HepG2 (cell line): ENCODE measurements at regions of chr17 and their contacts with region 1.

Region 1: DNA sequence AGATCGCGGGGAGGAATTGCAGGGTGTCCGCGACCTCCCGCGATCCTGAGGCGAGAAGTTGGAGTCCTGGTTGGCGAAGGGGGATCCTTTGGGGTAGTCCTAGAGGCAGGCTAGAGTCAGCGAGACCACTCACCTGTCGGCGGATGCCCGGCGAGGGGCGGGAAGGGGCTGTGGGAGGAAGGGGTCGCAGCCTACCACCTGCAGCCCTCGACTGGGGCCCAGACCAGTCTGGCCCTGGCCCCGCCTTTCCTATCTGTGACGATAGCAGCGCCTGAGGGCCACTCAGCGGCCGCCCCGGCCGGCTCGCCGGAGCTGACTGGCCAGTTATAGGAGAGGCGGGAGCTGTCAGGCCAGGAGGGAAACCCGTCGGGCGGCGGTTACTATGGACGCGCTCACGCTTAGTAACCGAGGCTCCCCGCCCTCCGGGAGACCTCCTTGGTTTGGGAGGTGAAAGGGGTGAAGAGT is at the start of gene TEKT3:
- DNase-seq: no peak
- ATAC-seq: no peak
- H3K4me3 ChIP-seq: no peak within 1 kb of the TSS
- H3K27ac ChIP-seq: no peak within 1 kb of the TSS
- H3K4me1 ChIP-seq: peaks cover 11% of the 10 kb centered on the region
- H3K27me3 ChIP-seq: peaks cover 0 to 31% of the 10 kb centered on the region in 2 experiments; a peak in 3 of 5 replicates
- CTCF ChIP-seq: no peak
- EP300 ChIP-seq: no peak
- POLR2A ChIP-seq: no peak
- RAD21 ChIP-seq: no peak
- total RNA-seq, gene TEKT3: 0.58 TPM in 1 of 2 replicates, not detected in the other

Region 2: DNA sequence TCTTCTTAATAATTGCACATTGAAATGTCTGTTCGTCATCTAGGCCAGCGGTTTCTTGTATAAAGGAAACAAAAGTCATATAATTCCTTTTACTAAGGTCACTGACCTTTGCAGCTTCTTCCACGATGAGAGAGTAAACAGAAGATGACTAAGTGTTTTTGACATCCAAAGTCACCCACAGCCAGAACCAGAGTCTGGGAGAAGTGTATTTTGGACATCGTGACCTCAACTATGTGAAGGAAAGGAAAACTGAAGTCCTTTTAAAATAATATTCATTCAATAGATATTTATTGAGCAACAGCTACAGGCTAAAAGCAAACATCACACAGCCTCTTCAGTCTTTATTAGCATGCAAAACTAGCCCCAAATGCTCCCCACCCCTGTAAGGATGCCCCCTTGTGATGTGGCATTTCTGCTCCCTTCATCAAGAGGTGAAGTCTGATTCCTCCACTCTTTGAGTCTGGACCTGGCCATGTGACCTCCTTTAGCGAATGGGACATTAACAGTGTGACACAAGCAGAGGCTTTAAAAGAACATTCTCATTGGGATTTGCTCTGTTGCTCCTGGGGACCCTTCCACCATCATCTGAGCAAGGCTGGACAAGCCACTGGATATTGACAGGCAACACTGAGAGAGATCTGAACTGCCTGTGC is 68.2 kb before region 1 on chr17:
- CTCF ChIA-PET with region 1: no interaction called
- POLR2A ChIA-PET with region 1: no interaction called
- in situ Hi-C with region 1: no loop called
- intact Hi-C with region 1: no loop called
- DNase-seq: no peak
- ATAC-seq: no peak
- H3K4me3 ChIP-seq: no peak overlapping the region
- H3K27ac ChIP-seq: no peak overlapping the region
- H3K4me1 ChIP-seq: no peaks in the 10 kb centered on the region; the same call in 1 of the 2 replicates
- H3K27me3 ChIP-seq: peaks cover 0 to 5% of the 10 kb centered on the region in 2 experiments; a peak in 3 of 5 replicates
- CTCF ChIP-seq: no peak
- EP300 ChIP-seq: no peak
- POLR2A ChIP-seq: no peak
- RAD21 ChIP-seq: no peak

Region 3: GRCh38 chr17:15289285-15290185 is 51.9 kb before region 1 on chr17:
- CTCF ChIA-PET with region 1: no interaction called
- POLR2A ChIA-PET with region 1: no interaction called
- in situ Hi-C with region 1: loop called (anchors 10 kb)
- intact Hi-C with region 1: no loop called
- DNase-seq: peak; percentile 25
- ATAC-seq: no peak; the same call in 2 of the 3 replicates
- H3K4me3 ChIP-seq: no peak overlapping the region
- H3K27ac ChIP-seq: no peak overlapping the region
- H3K4me1 ChIP-seq: peaks cover 8% of the 10 kb centered on the region; the same call in 1 of the 2 replicates
- H3K27me3 ChIP-seq: peaks cover 0 to 9% of the 10 kb centered on the region in 2 experiments; a peak in 1 of 5 replicates
- CTCF ChIP-seq: no peak
- EP300 ChIP-seq: no peak
- POLR2A ChIP-seq: no peak
- RAD21 ChIP-seq: no peak

Region 4: DNA sequence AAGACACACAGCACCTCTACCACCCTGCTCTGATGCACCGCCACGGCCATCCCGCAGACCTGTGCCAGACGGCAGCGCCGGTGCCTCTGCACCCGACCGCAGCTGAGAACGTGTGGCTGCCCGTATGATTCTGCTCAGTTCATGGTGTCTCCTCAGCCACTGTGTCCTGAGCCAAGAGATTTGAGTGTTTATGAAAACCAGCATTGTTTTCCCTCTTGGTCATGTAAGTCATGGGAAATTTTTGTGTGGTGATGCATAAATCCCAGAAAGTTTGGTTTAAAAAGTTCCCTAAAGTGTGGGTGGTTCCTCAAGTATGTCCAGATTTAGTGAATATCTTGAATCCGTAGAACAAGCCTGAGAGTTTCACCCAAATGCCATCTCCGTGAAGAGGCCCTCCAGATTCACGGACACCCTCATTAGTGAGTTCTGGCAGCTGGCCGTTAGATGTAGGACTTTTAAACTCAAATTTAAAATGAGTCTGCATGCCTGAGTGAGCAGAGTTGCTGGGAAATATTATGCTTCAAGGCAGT is 68.4 kb after region 1 on chr17:
- CTCF ChIA-PET with region 1: no interaction called
- POLR2A ChIA-PET with region 1: no interaction called
- in situ Hi-C with region 1: loop called (anchors 10 kb)
- intact Hi-C with region 1: no loop called
- DNase-seq: no peak
- ATAC-seq: no peak
- H3K4me3 ChIP-seq: no peak overlapping the region
- H3K27ac ChIP-seq: no peak overlapping the region
- H3K4me1 ChIP-seq: peaks cover 5% of the 10 kb centered on the region
- H3K27me3 ChIP-seq: no peaks in the 10 kb centered on the region
- CTCF ChIP-seq: no peak
- EP300 ChIP-seq: no peak
- POLR2A ChIP-seq: no peak
- RAD21 ChIP-seq: no peak